ENCODE measurements at regions of chr17 and their contacts with region 1.

Region 1: DNA sequence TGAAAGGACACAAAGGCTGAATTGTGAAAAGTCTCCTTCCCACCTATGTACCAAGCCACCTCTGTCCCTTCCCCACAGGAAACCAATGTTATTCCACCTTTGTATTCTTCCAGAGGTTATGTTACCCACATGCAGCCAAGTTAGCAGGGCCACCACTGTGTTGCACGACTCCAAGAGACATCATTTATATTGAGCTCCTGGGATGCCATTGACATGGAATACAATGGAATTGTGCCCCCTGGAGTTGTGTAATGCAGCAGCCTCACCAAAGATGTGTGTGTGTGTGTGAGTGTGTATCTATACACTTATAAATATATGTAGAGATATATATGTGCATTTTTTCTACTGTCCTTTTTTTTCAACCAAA is 21.6 kb upstream of the MSI2 start:
- DNase-seq: no peak
- H3K4me3 ChIP-seq: no peak overlapping the region
- H3K4me1 ChIP-seq: no peaks in the 10 kb centered on the region
- H3K27me3 ChIP-seq: no peaks in the 10 kb centered on the region

Region 2: GRCh38 chr17:57739402-57740392 is 505.0 kb after region 1 on chr17:
- in situ Hi-C with region 1: loop called (anchors 10 kb)
- DNase-seq: peak in 1 of 2 experiments; percentile 37
- H3K4me3 ChIP-seq: no peak overlapping the region
- H3K4me1 ChIP-seq: no peaks in the 10 kb centered on the region
- H3K27me3 ChIP-seq: peaks cover 14% of the 10 kb centered on the region

Measured in HAP-1 (cell line).